ENCODE measurements at regions of chr3 and their contacts with region 1.

Region 1: DNA sequence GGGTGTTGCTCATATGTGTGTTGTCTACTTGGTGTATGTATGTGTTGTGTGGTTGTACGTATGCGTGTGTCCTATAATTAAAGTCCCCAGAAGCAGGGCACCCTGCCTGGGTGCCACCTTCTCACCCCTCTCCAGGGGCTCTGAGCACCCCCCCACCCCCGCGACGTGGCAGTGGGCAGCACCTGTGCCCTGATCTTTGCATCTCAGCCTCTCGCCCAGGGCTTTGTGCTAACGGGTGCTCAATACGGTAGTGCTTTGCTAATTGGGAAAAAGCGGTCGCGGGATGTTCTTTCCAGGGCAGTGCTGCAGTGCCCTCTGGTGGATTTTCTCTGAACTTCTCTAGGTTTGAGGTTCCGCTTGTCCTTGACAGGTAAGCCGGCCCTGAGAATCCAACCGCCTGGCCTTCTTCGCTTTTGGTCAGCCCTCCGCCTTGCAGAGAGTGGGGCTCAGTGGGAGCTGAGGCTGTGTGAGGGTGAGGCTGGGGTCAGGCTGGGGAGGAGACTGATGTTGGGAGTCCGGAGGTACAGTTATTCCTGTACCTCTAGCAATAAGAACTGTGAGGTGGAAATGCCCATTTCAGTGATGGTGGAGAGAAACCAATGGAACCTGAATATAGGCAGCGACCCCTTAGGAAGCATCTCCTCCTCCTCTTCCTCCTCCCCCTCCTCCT is 17.6 kb upstream of the EPHB3 start:
- DNase-seq: peak; percentile 83
- H3K4me3 ChIP-seq: peak overlapping the region in 1 of 2 experiments; percentile 50; a peak in 1 of 4 replicates
- H3K27ac ChIP-seq: no peak overlapping the region
- H3K4me1 ChIP-seq: peaks cover 0 to 4% of the 10 kb centered on the region in 2 experiments; a peak in 1 of 4 replicates
- H3K27me3 ChIP-seq: peaks cover 24% of the 10 kb centered on the region
- CTCF ChIP-seq: peak; percentile 87
- EP300 ChIP-seq: no peak
- RAD21 ChIP-seq: peak; percentile 94

Region 2: GRCh38 chr3:184380191-184380626 is 163.8 kb before region 1 on chr3:
- CTCF ChIA-PET with region 1: interaction called, 165 read pairs
- POLR2A ChIA-PET with region 1: no interaction called
- DNase-seq: peak; percentile 91
- H3K4me3 ChIP-seq: peak overlapping the region; percentile 48 to 53
- H3K27ac ChIP-seq: no peak overlapping the region
- H3K4me1 ChIP-seq: peaks cover 0 to 12% of the 10 kb centered on the region in 2 experiments; a peak in 1 of 4 replicates
- H3K27me3 ChIP-seq: peaks cover 7% of the 10 kb centered on the region; the same call in 1 of the 2 replicates
- CTCF ChIP-seq: no peak
- EP300 ChIP-seq: no peak
- RAD21 ChIP-seq: no peak

Region 3: GRCh38 chr3:184417619-184418327 is 126.2 kb before region 1 on chr3:
- CTCF ChIA-PET with region 1: interaction called, 10 read pairs
- POLR2A ChIA-PET with region 1: no interaction called
- DNase-seq: peak; percentile 85
- H3K4me3 ChIP-seq: no peak overlapping the region; a peak in 1 of 4 replicates
- H3K27ac ChIP-seq: no peak overlapping the region
- H3K4me1 ChIP-seq: no peaks in the 10 kb centered on the region; a peak in 1 of 4 replicates
- H3K27me3 ChIP-seq: no peaks in the 10 kb centered on the region
- CTCF ChIP-seq: peak; percentile 94
- EP300 ChIP-seq: no peak
- RAD21 ChIP-seq: peak; percentile 87

Region 4: GRCh38 chr3:184469423-184469822 is 74.6 kb before region 1 on chr3:
- CTCF ChIA-PET with region 1: interaction called, 13 read pairs
- POLR2A ChIA-PET with region 1: no interaction called
- DNase-seq: peak; percentile 64
- H3K4me3 ChIP-seq: no peak overlapping the region
- H3K27ac ChIP-seq: no peak overlapping the region
- H3K4me1 ChIP-seq: peaks cover 0 to 7% of the 10 kb centered on the region in 2 experiments; a peak in 1 of 4 replicates
- H3K27me3 ChIP-seq: peaks cover 26% of the 10 kb centered on the region; the same call in 1 of the 2 replicates
- CTCF ChIP-seq: peak; percentile 68
- EP300 ChIP-seq: no peak
- RAD21 ChIP-seq: peak; percentile 73

Region 5: DNA sequence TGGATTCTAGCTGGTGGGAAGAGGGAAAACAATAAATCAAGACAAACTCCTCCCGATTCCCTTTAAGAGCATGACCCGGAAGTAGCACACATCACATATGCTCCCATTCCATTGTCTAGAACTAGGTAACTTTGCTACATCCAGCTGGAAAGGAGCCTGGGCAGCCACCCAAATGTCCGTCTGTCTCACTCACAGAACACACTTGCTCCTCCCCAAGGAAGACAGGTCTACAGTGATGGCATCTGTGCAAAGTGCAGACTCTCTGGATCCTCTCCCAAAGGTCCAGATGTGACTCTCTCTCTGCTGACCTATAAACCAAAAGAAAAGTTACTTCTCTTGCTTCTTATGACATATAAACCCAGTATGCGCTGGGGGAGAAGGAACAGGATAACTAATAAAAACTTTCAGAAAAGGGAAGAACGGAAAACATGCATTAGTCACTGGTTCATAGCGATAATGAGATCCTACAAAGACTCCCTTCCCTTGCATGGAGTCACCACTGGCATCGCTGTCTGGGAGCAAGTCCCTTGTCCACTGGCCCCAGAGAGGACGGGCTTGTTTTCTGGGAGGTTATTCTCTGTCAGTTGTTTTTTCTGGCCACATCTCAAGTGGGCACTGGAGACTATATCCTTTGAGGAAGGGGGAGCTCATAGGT is 12.2 kb before region 1 on chr3:
- CTCF ChIA-PET with region 1: interaction called, 24 read pairs
- POLR2A ChIA-PET with region 1: no interaction called
- DNase-seq: no peak
- H3K4me3 ChIP-seq: no peak overlapping the region
- H3K27ac ChIP-seq: no peak overlapping the region
- H3K4me1 ChIP-seq: no peaks in the 10 kb centered on the region
- H3K27me3 ChIP-seq: peaks cover 73% of the 10 kb centered on the region
- CTCF ChIP-seq: no peak
- EP300 ChIP-seq: no peak
- RAD21 ChIP-seq: no peak

Region 6: GRCh38 chr3:185225523-185225922 is 681.5 kb after region 1 on chr3:
- CTCF ChIA-PET with region 1: no interaction called
- POLR2A ChIA-PET with region 1: no interaction called
- DNase-seq: no peak
- H3K4me3 ChIP-seq: no peak overlapping the region
- H3K27ac ChIP-seq: no peak overlapping the region
- H3K4me1 ChIP-seq: no peaks in the 10 kb centered on the region; a peak in 1 of 4 replicates
- H3K27me3 ChIP-seq: no peaks in the 10 kb centered on the region
- CTCF ChIP-seq: no peak
- EP300 ChIP-seq: no peak
- RAD21 ChIP-seq: no peak